ENCODE measurements at regions of chr11 and their contacts with region 1.

Region 1: DNA sequence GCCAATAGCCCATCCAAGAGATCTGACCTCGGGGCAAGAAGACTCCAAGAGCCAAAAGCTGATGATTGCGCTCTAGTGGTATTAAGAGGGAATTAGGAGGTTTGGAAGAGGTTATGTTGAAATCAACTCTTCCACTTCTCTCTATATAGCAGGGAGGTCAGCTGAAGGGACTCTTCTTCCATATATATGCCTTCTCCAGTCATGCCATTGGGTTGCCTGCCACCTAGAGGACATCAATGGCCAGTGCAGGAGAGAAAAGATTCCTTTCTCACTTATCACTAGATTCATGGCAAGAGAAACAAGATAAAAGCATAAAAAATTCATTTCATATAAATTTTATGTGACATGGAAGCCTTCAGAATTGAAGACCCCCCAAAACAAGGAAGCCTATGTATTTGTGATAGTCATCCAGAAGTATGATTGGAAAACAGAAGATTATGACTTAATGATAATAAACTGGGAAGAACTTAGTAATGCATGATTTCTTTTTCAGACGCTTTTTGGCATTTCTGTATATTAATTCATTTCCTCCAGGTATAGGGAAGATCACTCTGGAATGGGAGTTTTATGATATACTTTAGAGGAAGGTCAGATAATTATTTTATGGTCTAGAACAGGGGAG is 435.1 kb upstream of the DDI1 start:
- DNase-seq: no peak
- ATAC-seq: peak; percentile 64

Region 2: DNA sequence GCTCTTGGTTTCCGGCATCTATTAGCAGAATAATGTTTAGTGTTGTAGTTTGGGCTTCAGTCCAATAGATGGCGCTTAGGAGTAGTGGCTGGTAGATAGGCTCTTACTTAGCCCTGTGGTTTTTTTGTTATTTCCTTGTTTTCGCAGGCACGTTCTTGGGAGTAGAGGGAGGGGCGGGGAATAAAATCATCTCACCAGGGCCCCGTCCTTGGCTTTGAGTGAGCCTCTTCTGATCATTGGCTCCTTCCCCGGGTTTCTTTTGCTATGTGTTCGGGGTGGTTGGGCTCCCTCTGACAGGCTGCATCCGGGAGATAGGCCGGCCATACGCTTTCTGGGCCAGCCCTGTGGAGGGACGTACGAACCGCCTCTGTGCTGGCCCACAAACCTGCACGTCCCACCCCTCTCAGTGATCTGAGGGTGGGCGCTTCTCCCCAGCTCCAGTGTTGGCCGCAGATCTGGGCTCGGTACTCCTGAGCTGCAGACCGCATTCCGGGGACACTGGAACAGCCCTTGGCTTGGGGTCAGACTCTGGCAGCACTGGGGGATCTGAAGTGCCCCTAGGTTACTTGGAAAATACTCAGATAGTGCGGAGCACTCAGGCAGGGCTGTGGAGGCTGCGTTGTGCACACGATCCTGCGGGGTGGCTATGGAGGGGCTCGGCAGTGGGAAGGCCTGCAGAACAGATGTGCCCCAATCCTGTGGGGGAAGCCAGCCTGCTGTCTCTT is 275.1 kb before region 1 on chr11:
- intact Hi-C with region 1: loop called (anchors 5 kb)
- DNase-seq: no peak
- ATAC-seq: peak; percentile 79

Region 3: GRCh38 chr11:103338621-103339484 is 262.5 kb before region 1 on chr11:
- intact Hi-C with region 1: no loop called
- DNase-seq: no peak
- ATAC-seq: no peak

Region 4: DNA sequence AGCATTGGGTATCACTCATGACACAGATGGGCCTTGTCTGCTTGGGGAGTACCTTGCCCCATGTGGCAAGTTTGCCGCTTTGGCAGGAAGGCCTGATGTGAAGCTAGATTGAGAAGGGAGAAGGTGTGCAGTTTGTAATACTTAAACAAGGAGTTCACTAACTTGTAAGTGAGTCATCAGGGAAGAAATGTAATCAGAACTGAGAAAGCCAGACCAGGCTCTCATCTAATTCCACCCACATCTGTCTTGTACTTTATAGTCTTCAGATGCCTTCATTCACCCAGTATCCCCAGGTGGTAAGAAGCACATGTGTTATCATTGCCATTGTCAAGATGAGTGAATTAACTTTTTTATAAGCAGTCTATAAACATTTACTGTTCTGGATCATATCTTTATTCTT is 319.1 kb after region 1 on chr11:
- intact Hi-C with region 1: no loop called
- DNase-seq: no peak
- ATAC-seq: no peak